Head of caudate nucleus (tissue), 42 donors: ENCODE measurements at regions of chr3 and their contacts with region 1.

Region 1: GRCh38 chr3:56702490-56703315 is 19.6 kb upstream of the TASOR start:
- DNase-seq: peak in 31 of 42 donors; percentile 17 to 87 (median 54)

Region 2: GRCh38 chr3:56801662-56802377 is 99.1 kb after region 1 on chr3 and contains the start of gene ARHGEF3:
- intact Hi-C with region 1: loop called (anchors 5 kb)
- DNase-seq: peak; percentile 75 to 97 (median 92)

Region 3: DNA sequence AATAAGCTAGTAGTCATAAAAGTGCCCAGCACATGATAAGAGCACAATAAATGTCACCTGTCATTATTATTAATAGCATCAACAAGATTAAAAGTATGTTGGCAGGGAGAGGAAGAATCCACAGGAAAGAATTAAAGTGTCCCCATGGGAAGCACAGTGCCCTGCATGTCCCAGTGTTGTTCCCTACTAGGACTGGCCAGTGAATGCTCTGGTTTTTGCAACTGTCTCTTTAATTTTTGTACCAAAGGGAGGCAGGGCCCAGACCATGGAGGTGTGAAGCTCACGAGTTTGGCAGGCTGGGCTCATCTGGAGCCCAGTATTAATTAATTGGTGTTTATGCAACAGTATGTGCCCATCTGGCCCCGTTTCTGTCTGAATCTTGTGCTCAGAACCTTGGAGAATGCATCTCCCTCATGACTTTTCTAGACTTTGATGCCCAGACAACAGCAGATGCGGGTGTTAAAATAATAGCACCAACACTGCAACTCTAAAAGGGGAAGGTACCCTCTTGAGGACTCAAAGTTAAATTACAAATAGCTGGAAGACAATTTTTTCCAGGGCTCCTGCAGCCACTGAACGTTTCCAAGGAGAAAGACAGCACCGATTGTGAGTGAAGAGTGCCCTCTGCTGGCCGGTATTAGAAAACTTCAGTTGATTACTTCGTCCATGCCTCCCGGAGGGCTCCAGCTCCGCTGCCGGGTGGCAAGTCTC is 285.9 kb after region 1 on chr3:
- intact Hi-C with region 1: loop called (anchors 2 kb)
- DNase-seq: peak; percentile 68 to 97 (median 90)